CD4-positive, alpha-beta T cell (primary cell): ENCODE measurements at regions of chr1 and their contacts with region 1.

Region 1: GRCh38 chr1:151984313-151984956 is 9.2 kb downstream of the S100A10 start:
- DNase-seq: peak in 1 of 14 experiments; percentile 55
- ATAC-seq: peak; percentile 68
- H3K4me3 ChIP-seq: no peak overlapping the region
- H3K4me3 Mint-ChIP-seq: no peak overlapping the region
- H3K27ac ChIP-seq: peak overlapping the region in 1 of 2 donors; percentile 11
- H3K27ac Mint-ChIP-seq: peak overlapping the region; percentile 69
- H3K4me1 ChIP-seq: peaks cover 29% of the 10 kb centered on the region
- H3K4me1 Mint-ChIP-seq: peaks cover 46% of the 10 kb centered on the region
- H3K27me3 ChIP-seq: no peaks in the 10 kb centered on the region
- H3K27me3 Mint-ChIP-seq: no peaks in the 10 kb centered on the region
- CTCF ChIP-seq: no peak

Region 2: DNA sequence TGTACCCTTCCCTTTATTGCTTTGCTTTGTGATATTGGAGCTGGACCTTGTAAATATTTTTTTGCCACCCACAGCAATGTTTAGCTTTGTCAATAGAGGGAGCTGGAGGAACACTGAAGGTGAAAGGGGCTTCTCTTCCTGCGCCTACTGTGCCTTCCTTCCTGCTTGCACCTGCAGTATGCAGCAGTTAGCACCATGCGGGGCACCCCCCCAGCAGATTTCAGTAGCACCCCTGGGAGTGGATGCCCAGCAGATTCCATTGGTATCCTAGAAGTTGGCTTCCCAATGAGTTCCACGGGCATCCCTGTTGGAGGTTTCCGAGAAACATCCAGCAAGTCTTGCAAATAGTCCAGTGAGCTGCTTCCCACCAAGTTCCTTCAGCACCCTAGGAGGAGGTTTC is 16.4 kb before region 1 on chr1:
- CTCF ChIA-PET with region 1: interaction called, 11 read pairs
- POLR2A ChIA-PET with region 1: no interaction called
- intact Hi-C with region 1: no loop called
- DNase-seq: peak; percentile 20 to 83 (median 38)
- ATAC-seq: peak; percentile 99
- H3K4me3 ChIP-seq: no peak overlapping the region
- H3K4me3 Mint-ChIP-seq: no peak overlapping the region
- H3K27ac ChIP-seq: no peak overlapping the region
- H3K27ac Mint-ChIP-seq: no peak overlapping the region
- H3K4me1 ChIP-seq: peaks cover 9% of the 10 kb centered on the region
- H3K4me1 Mint-ChIP-seq: peaks cover 7% of the 10 kb centered on the region
- H3K27me3 ChIP-seq: no peaks in the 10 kb centered on the region
- H3K27me3 Mint-ChIP-seq: no peaks in the 10 kb centered on the region
- CTCF ChIP-seq: peak; percentile 72

Region 3: GRCh38 chr1:152036267-152037216 is 52.1 kb after region 1 on chr1 and contains the start of gene S100A11:
- CTCF ChIA-PET with region 1: no interaction called
- POLR2A ChIA-PET with region 1: no interaction called
- intact Hi-C with region 1: no loop called
- DNase-seq: peak; percentile 46 to 87 (median 73)
- ATAC-seq: peak; percentile 41
- H3K4me3 ChIP-seq: peak within 1 kb of the TSS; percentile 88
- H3K4me3 Mint-ChIP-seq: peak within 1 kb of the TSS; percentile 97
- H3K27ac ChIP-seq: peak within 1 kb of the TSS; percentile 86
- H3K27ac Mint-ChIP-seq: peak within 1 kb of the TSS; percentile 99
- H3K4me1 ChIP-seq: peaks cover 40% of the 10 kb centered on the region
- H3K4me1 Mint-ChIP-seq: peaks cover 51% of the 10 kb centered on the region
- H3K27me3 ChIP-seq: no peaks in the 10 kb centered on the region
- H3K27me3 Mint-ChIP-seq: no peaks in the 10 kb centered on the region
- CTCF ChIP-seq: no peak
- total RNA-seq, gene S100A11: 23.6 to 24.1 TPM

Region 4: DNA sequence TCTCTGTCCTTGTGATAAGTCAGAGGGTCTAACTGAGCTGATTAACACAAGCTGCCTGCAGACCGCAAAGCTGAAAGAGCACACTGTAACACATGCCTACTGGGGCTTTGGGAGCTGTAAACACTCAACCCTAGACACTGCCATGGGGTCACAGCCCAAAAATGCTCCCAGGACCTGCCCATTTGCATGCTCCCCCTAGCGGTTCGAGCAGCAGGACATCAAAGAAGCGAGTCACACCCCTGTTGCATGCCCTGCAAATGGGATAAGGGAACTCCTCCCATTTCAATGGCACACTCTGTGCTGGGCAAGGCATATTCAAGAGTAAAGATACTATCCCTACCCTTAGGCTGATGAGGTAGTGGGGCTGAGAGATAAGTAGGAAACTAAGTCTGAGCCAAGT is 559.4 kb after region 1 on chr1:
- CTCF ChIA-PET with region 1: no interaction called
- POLR2A ChIA-PET with region 1: no interaction called
- intact Hi-C with region 1: no loop called
- DNase-seq: no peak
- ATAC-seq: no peak
- H3K4me3 ChIP-seq: no peak overlapping the region
- H3K4me3 Mint-ChIP-seq: no peak overlapping the region
- H3K27ac ChIP-seq: no peak overlapping the region
- H3K27ac Mint-ChIP-seq: no peak overlapping the region
- H3K4me1 ChIP-seq: no peaks in the 10 kb centered on the region
- H3K4me1 Mint-ChIP-seq: no peaks in the 10 kb centered on the region
- H3K27me3 ChIP-seq: peaks cover 4 to 16% of the 10 kb centered on the region in 2 experiments
- H3K27me3 Mint-ChIP-seq: peaks cover 42% of the 10 kb centered on the region
- CTCF ChIP-seq: no peak